PC-9 (cell line): ENCODE measurements at regions of chr3 and their contacts with region 1.

Region 1: GRCh38 chr3:49093853-49094767 is at the start of gene QRICH1:
- DNase-seq: peak; percentile 95 to 96
- H3K4me3 ChIP-seq: peak within 1 kb of the TSS; percentile 93
- H3K27ac ChIP-seq: peak within 1 kb of the TSS; percentile 87
- H3K4me1 ChIP-seq: peaks cover 17% of the 10 kb centered on the region
- H3K27me3 ChIP-seq: no peaks in the 10 kb centered on the region
- CTCF ChIP-seq: peak; percentile 47; the same call in 1 of the 2 replicates
- total RNA-seq, gene QRICH1: 84.8 and 87.5 TPM in 2 replicates

Region 2: GRCh38 chr3:48837163-48837562 is 256.9 kb before region 1 on chr3:
- CTCF ChIA-PET with region 1: no interaction called
- POLR2A ChIA-PET with region 1: no interaction called
- intact Hi-C with region 1: no loop called
- DNase-seq: no peak
- H3K4me3 ChIP-seq: no peak overlapping the region
- H3K27ac ChIP-seq: no peak overlapping the region
- H3K4me1 ChIP-seq: no peaks in the 10 kb centered on the region
- H3K27me3 ChIP-seq: no peaks in the 10 kb centered on the region
- CTCF ChIP-seq: no peak

Region 3: GRCh38 chr3:49007068-49007770 is 86.9 kb before region 1 on chr3 and contains the start of gene WDR6:
- CTCF ChIA-PET with region 1: interaction called, 4 read pairs
- POLR2A ChIA-PET with region 1: interaction called, 16 read pairs
- intact Hi-C with region 1: loop called (anchors 1 kb)
- DNase-seq: peak; percentile 90 to 97
- H3K4me3 ChIP-seq: peak within 1 kb of the TSS; percentile 81
- H3K27ac ChIP-seq: peak within 1 kb of the TSS; percentile 87
- H3K4me1 ChIP-seq: peaks cover 9% of the 10 kb centered on the region; the same call in 1 of the 2 replicates
- H3K27me3 ChIP-seq: no peaks in the 10 kb centered on the region
- CTCF ChIP-seq: peak; percentile 60
- total RNA-seq, gene WDR6: 157 and 159 TPM in 2 replicates

Region 4: GRCh38 chr3:49021813-49022687 is 72.1 kb before region 1 on chr3 and contains the start of gene NDUFAF3:
- CTCF ChIA-PET with region 1: no interaction called
- POLR2A ChIA-PET with region 1: interaction called, 12 read pairs
- intact Hi-C with region 1: loop called (anchors 5 kb)
- DNase-seq: peak; percentile 87 to 97
- H3K4me3 ChIP-seq: peak within 1 kb of the TSS; percentile 70
- H3K27ac ChIP-seq: peak within 1 kb of the TSS; percentile 87
- H3K4me1 ChIP-seq: peaks cover 29% of the 10 kb centered on the region
- H3K27me3 ChIP-seq: no peaks in the 10 kb centered on the region
- CTCF ChIP-seq: peak; percentile 90
- total RNA-seq, gene NDUFAF3: 32.9 and 38.8 TPM in 2 replicates

Region 5: DNA sequence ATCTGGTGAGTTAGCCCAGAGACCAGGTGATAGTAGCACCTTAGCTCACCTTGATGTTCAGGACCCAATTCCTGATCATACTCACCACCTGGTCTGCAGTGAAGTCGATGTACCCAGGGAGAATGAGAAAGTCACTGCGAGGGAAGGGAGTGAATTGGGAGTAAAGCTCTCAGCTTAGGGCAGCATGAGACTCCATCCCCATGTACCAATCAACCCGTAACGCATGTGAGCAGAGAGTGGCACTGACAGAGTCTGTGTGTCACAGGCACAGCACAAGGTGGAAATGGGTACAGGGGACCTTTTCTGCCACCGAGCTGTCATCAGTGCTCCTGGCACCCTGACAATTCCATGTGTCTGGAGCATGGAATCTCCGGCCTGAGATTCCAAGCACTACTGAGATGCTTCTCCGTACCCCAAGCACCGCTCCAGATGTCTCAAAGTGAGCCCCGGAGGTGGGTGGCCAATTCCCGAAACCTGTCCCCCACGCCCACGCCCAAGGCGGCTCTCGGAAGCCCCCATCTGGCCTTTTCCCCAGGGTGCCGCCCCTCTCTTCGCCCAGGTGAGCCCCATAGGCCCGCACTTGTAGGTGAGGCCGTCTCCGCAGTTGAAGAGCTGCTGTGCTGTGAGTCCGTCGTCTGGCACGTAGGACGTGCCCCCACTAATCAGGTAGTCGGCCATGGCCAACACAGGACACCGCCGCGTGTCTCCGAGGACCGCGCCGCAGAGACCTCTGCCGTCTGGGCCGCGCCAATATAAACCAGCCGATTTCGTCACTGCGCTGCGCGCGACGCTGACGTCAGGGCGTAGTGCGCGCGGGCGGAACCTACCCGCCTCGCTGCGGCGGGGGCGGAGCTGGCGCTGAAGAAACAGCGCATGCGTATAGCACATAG is 65.2 kb before region 1 on chr3 and contains the start of gene IMPDH2:
- CTCF ChIA-PET with region 1: no interaction called
- POLR2A ChIA-PET with region 1: interaction called, 6 read pairs
- intact Hi-C with region 1: loop called (anchors 5 kb)
- DNase-seq: peak; percentile 76 to 89
- H3K4me3 ChIP-seq: peak within 1 kb of the TSS; percentile 77
- H3K27ac ChIP-seq: peak within 1 kb of the TSS; percentile 47
- H3K4me1 ChIP-seq: peaks cover 8% of the 10 kb centered on the region
- H3K27me3 ChIP-seq: no peaks in the 10 kb centered on the region
- CTCF ChIP-seq: no peak
- total RNA-seq, gene IMPDH2: 190 and 222 TPM in 2 replicates

Region 6: GRCh38 chr3:49076646-49077045 is 17.5 kb before region 1 on chr3:
- CTCF ChIA-PET with region 1: no interaction called
- POLR2A ChIA-PET with region 1: interaction called, 19 read pairs
- intact Hi-C with region 1: no loop called
- DNase-seq: no peak
- H3K4me3 ChIP-seq: no peak overlapping the region
- H3K27ac ChIP-seq: no peak overlapping the region
- H3K4me1 ChIP-seq: no peaks in the 10 kb centered on the region
- H3K27me3 ChIP-seq: no peaks in the 10 kb centered on the region
- CTCF ChIP-seq: no peak

Region 7: GRCh38 chr3:49104483-49105291 is 10.6 kb after region 1 on chr3 and contains the start of gene QARS1:
- CTCF ChIA-PET with region 1: interaction called, 4 read pairs
- POLR2A ChIA-PET with region 1: interaction called, 19 read pairs
- intact Hi-C with region 1: loop called (anchors 1 kb)
- DNase-seq: peak; percentile 88 to 93
- H3K4me3 ChIP-seq: peak within 1 kb of the TSS; percentile 96
- H3K27ac ChIP-seq: peak within 1 kb of the TSS; percentile 58
- H3K4me1 ChIP-seq: peaks cover 5% of the 10 kb centered on the region
- H3K27me3 ChIP-seq: no peaks in the 10 kb centered on the region
- CTCF ChIP-seq: no peak
- total RNA-seq, gene QARS1: 334 and 337 TPM in 2 replicates

Region 8: DNA sequence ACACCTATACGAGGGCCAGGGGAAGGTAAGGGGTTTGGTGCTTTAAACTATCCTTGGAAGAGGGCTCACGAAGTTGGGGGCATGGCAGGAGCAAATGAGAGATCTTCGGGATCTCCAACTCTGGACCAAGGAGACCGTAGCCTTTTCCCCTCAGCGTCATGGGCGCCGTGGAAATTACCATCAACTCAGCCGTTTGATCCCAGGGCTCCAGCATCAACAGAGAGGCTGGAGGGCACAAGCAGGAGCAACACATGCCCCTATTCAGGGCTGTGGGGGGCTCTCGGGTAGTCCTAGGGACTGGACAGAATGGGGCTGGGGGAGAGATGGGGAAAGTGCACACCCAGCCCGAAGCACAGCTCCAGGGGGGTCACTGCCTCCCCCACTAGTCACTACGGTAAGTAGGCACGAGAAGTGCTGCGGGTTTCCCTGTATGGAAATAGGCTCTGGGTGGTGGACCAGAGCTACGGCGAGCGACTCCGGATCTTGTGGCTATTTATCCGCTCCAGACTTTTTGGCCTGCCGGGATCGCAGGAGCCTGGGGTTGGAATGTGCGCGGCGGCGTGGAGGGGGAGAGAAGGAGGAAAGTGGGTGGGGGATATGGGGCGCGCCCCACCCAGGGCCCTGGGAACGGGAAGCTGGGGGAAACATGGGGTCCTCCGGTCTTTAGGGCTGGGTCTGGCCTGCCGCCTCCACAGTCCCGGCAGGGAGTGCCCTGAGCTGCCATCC is 39.3 kb after region 1 on chr3:
- CTCF ChIA-PET with region 1: interaction called, 5 read pairs
- POLR2A ChIA-PET with region 1: interaction called, 3 read pairs
- intact Hi-C with region 1: loop called (anchors 1 kb)
- DNase-seq: peak; percentile 71 to 85
- H3K4me3 ChIP-seq: peak overlapping the region; percentile 78
- H3K27ac ChIP-seq: peak overlapping the region; percentile 92
- H3K4me1 ChIP-seq: peaks cover 19% of the 10 kb centered on the region
- H3K27me3 ChIP-seq: no peaks in the 10 kb centered on the region
- CTCF ChIP-seq: no peak

Region 9: DNA sequence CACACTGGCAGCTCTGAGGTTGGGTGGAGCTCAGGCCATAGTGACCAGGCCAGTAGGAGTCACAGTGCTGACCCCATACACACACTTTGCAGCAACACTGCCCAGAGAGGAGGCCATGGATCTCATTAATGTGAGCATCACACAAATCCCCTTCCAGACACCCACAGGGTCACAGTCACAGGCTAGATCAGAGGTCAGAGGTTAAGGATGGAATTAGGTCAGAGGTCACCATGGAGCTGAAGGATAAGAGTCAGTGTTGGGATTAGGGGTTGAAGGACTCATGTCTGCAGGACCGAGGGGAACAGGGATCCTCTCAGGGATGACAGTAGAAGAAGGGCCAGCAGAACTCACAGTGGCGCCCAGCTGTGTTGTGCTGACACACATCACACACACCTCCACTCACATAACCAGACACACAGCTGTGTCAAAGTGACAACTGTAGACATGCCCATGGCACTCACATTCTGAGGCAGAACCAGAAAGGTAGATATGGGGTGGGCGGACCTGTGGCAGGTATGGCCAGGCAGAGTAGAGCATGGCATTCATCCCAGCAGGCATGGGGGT is 59.3 kb after region 1 on chr3:
- CTCF ChIA-PET with region 1: no interaction called
- POLR2A ChIA-PET with region 1: no interaction called
- intact Hi-C with region 1: no loop called
- DNase-seq: no peak
- H3K4me3 ChIP-seq: no peak overlapping the region
- H3K27ac ChIP-seq: no peak overlapping the region
- H3K4me1 ChIP-seq: no peaks in the 10 kb centered on the region
- H3K27me3 ChIP-seq: no peaks in the 10 kb centered on the region
- CTCF ChIP-seq: no peak